ENCODE measurements at regions of chr18 and their contacts with region 1.

Region 1: GRCh38 chr18:68660354-68661183 is 54.3 kb downstream of the TMX3 start:
- DNase-seq: no peak
- ATAC-seq: no peak
- H3K4me3 ChIP-seq: no peak overlapping the region
- H3K4me1 ChIP-seq: no peaks in the 10 kb centered on the region
- CTCF ChIP-seq: peak; percentile 7

Region 2: DNA sequence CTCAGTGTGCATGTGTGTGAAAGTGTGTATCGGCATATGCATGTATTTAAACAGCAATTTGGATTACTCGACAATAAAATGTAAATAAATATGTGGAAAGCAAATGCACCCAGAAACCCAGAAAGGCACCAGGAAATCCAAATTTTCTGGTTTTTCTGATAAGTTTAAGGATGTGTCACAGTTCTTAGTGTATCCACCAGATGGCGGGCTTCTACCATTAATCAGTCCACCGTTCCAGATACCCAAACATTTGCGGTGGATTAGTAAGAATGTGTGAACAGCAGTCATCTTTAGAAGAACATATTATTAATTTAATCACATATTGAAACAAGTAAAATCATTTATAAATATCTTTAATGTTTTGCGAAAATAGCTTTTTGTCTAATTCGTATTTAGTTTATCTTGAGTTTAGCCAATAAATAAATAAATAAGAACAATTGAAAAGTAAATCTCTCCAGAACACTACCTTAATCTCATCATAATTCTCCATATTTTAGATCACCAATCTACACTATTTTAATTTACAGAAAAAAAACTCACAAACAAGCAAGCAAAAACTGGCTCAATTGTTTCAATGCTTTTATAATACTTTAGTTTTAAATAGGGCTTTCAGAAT is 1442.9 kb before region 1 on chr18:
- intact Hi-C with region 1: loop called (anchors 5 to 10 kb)
- DNase-seq: peak in 1 of 3 donors; percentile 71
- ATAC-seq: peak; percentile 56
- H3K4me3 ChIP-seq: no peak overlapping the region
- H3K4me1 ChIP-seq: no peaks in the 10 kb centered on the region
- CTCF ChIP-seq: peak; percentile 44

Region 3: GRCh38 chr18:68703326-68703725 is 42.8 kb after region 1 on chr18:
- intact Hi-C with region 1: no loop called
- DNase-seq: no peak
- ATAC-seq: no peak
- H3K4me3 ChIP-seq: no peak overlapping the region
- H3K4me1 ChIP-seq: no peaks in the 10 kb centered on the region
- CTCF ChIP-seq: no peak